Head of caudate nucleus (tissue), 42 donors: ENCODE measurements at regions of chr3 and their contacts with region 1.

Region 1: DNA sequence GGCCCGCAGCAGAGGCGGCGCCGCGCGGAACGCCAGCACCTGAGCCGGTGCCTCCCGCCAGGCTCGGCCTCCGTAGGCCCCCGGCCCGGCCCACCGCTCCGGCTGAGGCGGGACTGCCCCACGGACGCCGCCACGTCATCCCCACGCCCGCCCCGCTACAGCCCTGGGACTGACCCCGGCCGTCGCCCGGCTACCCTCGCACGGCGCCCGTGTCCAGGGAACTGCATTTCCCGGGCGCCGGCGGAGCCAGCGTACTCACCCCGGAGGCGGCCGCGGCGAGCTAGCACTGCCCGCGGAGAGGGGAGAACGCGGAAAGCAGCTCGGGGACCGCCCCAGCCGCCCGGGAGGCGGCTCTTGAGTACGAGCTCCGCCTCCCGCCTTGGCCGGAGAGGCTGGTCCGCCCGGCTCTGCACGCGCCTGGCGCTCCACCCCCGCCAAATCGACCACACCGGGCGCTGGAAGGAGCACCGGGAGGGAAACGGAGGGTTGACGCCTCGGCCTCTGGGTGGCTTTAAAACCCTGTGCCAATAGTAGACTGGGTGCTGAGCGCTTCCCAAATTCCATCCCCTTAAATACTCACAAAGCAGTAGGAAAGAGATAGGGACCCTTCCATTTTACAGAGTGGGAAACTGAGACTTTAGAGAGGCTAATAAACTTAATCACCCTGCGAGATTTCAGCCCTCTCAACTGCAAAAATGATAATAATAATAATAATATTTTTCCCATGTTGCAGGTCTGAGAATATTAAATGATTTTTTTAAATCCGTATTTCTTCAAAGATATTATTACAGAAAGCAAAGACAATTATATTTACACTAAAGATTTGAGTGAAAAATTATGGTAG is at the start of gene B4GALT4:
- DNase-seq: peak; percentile 46 to 92 (median 84)

Region 2: GRCh38 chr3:119145500-119146191 is 95.2 kb before region 1 on chr3 and contains the start of gene TEX55:
- intact Hi-C with region 1: loop called (anchors 5 kb)
- DNase-seq: peak in 8 of 42 donors; percentile 3 to 47 (median 18)